HCT116 (cell line): ENCODE measurements at regions of chr20 and their contacts with region 1.

Region 1: GRCh38 chr20:20130399-20130798 is 78.1 kb downstream of the CFAP61 start:
- DNase-seq: peak; percentile 33
- ATAC-seq: peak; percentile 84
- H3K4me3 ChIP-seq: no peak overlapping the region
- H3K27ac ChIP-seq: no peak overlapping the region
- H3K4me1 ChIP-seq: no peaks in the 10 kb centered on the region
- H3K27me3 ChIP-seq: no peaks in the 10 kb centered on the region
- CTCF ChIP-seq: peak; percentile 35 to 66 (median 59); a peak in 5 of 6 replicates
- POLR2A ChIP-seq: no peak
- RAD21 ChIP-seq: peak; percentile 69

Region 2: DNA sequence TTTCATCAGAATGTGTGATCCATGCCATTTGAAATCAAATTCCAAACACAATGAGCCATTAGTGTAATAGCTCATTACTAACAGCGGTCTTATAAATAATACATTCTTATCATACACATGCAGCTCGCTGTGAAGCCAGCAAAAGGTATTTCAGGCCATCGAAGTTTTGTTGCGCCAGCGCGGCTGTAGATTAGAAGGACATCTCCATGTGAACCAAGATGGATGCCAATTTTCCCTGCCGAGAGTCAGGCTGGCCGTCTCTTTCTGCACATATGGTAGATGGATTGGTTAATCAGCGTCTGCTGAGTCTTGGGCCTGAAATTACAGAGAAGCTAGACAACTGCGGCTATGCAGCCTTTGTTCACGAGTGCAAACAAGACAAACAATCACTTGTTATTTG is 34.0 kb before region 1 on chr20:
- CTCF ChIA-PET with region 1: no interaction called
- POLR2A ChIA-PET with region 1: no interaction called
- RAD21 ChIA-PET with region 1: no interaction called
- intact Hi-C with region 1: no loop called
- DNase-seq: no peak
- ATAC-seq: no peak
- H3K4me3 ChIP-seq: no peak overlapping the region
- H3K27ac ChIP-seq: no peak overlapping the region
- H3K4me1 ChIP-seq: no peaks in the 10 kb centered on the region
- H3K27me3 ChIP-seq: no peaks in the 10 kb centered on the region
- CTCF ChIP-seq: no peak
- POLR2A ChIP-seq: no peak
- RAD21 ChIP-seq: no peak

Region 3: DNA sequence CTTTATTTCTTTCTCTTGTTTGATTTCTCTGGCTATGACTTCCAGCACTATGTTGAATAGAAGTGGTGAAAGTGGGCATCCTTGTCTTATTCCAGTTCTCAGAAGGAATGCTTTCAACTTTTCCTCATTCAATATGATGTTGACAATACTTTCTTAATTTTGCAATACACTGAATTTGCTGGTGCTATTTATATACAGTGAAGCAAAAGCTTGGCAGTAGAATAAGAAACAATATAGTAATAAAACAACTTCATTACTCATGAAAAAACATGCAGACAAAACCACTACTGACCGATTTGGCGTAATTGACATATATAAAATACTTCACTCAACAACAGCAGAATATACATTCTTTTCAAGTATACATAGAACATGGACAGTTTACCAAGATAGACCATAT is 18.4 kb after region 1 on chr20:
- CTCF ChIA-PET with region 1: no interaction called
- POLR2A ChIA-PET with region 1: no interaction called
- RAD21 ChIA-PET with region 1: no interaction called
- intact Hi-C with region 1: no loop called
- DNase-seq: no peak
- ATAC-seq: no peak
- H3K4me3 ChIP-seq: no peak overlapping the region
- H3K27ac ChIP-seq: no peak overlapping the region
- H3K4me1 ChIP-seq: no peaks in the 10 kb centered on the region
- H3K27me3 ChIP-seq: no peaks in the 10 kb centered on the region
- CTCF ChIP-seq: no peak
- POLR2A ChIP-seq: no peak
- RAD21 ChIP-seq: no peak

Region 4: GRCh38 chr20:20568604-20569205 is 438.3 kb after region 1 on chr20:
- CTCF ChIA-PET with region 1: interaction called, 3 read pairs
- POLR2A ChIA-PET with region 1: no interaction called
- RAD21 ChIA-PET with region 1: no interaction called
- intact Hi-C with region 1: loop called (anchors 1 kb)
- DNase-seq: no peak
- ATAC-seq: no peak
- H3K4me3 ChIP-seq: no peak overlapping the region
- H3K27ac ChIP-seq: no peak overlapping the region
- H3K4me1 ChIP-seq: no peaks in the 10 kb centered on the region
- H3K27me3 ChIP-seq: no peaks in the 10 kb centered on the region
- CTCF ChIP-seq: peak; percentile 61 to 75 (median 69)
- POLR2A ChIP-seq: no peak
- RAD21 ChIP-seq: peak; percentile 81

Region 5: GRCh38 chr20:20580139-20580538 is 449.7 kb after region 1 on chr20:
- CTCF ChIA-PET with region 1: no interaction called
- POLR2A ChIA-PET with region 1: no interaction called
- RAD21 ChIA-PET with region 1: no interaction called
- intact Hi-C with region 1: no loop called
- DNase-seq: no peak
- ATAC-seq: no peak
- H3K4me3 ChIP-seq: no peak overlapping the region
- H3K27ac ChIP-seq: no peak overlapping the region
- H3K4me1 ChIP-seq: no peaks in the 10 kb centered on the region
- H3K27me3 ChIP-seq: no peaks in the 10 kb centered on the region
- CTCF ChIP-seq: no peak
- POLR2A ChIP-seq: no peak
- RAD21 ChIP-seq: no peak

Region 6: GRCh38 chr20:20593447-20594170 is 463.2 kb after region 1 on chr20:
- CTCF ChIA-PET with region 1: interaction called, 10 read pairs
- POLR2A ChIA-PET with region 1: no interaction called
- RAD21 ChIA-PET with region 1: no interaction called
- intact Hi-C with region 1: no loop called
- DNase-seq: peak; percentile 18
- ATAC-seq: peak; percentile 80
- H3K4me3 ChIP-seq: no peak overlapping the region
- H3K27ac ChIP-seq: no peak overlapping the region
- H3K4me1 ChIP-seq: no peaks in the 10 kb centered on the region
- H3K27me3 ChIP-seq: no peaks in the 10 kb centered on the region
- CTCF ChIP-seq: peak in 2 of 3 experiments; percentile 74 to 77
- POLR2A ChIP-seq: no peak
- RAD21 ChIP-seq: peak; percentile 35; the same call in 1 of the 2 replicates

Region 7: GRCh38 chr20:20824924-20825584 is 694.7 kb after region 1 on chr20:
- CTCF ChIA-PET with region 1: interaction called, 5 read pairs
- POLR2A ChIA-PET with region 1: no interaction called
- RAD21 ChIA-PET with region 1: no interaction called
- intact Hi-C with region 1: loop called (anchors 5 kb)
- DNase-seq: no peak
- ATAC-seq: peak; percentile 80
- H3K4me3 ChIP-seq: no peak overlapping the region
- H3K27ac ChIP-seq: no peak overlapping the region
- H3K4me1 ChIP-seq: 0 out of 4 replicates have a peak, but pooled peaks cover 0 to 5% of the 10 kb centered on the region in 2 experiments
- H3K27me3 ChIP-seq: peaks cover 10% of the 10 kb centered on the region; the same call in 1 of the 2 replicates
- CTCF ChIP-seq: peak; percentile 59 to 83 (median 78); a peak in 5 of 6 replicates
- POLR2A ChIP-seq: no peak
- RAD21 ChIP-seq: peak; percentile 65